ENCODE measurements at regions of chr3 and their contacts with region 1.

Region 1: GRCh38 chr3:120417272-120417911 is 33.4 kb downstream of the FSTL1 start:
- DNase-seq: peak; percentile 95 to 96
- H3K4me3 ChIP-seq: no peak overlapping the region
- H3K27ac ChIP-seq: peak overlapping the region; percentile 51 to 79 (median 58)
- H3K4me1 ChIP-seq: peaks cover 13 to 31% of the 10 kb centered on the region in 2 donors
- H3K27me3 ChIP-seq: no peaks in the 10 kb centered on the region
- CTCF ChIP-seq: peak; percentile 68 to 98 (median 88)
- POLR2A ChIP-seq: peak in 1 of 2 donors; percentile 62

Region 2: GRCh38 chr3:120245386-120245785 is 172.0 kb before region 1 on chr3:
- intact Hi-C with region 1: loop called (anchors 2 kb)
- DNase-seq: no peak
- H3K4me3 ChIP-seq: no peak overlapping the region
- H3K27ac ChIP-seq: no peak overlapping the region
- H3K4me1 ChIP-seq: no peaks in the 10 kb centered on the region
- H3K27me3 ChIP-seq: no peaks in the 10 kb centered on the region
- CTCF ChIP-seq: no peak
- POLR2A ChIP-seq: no peak

Region 3: DNA sequence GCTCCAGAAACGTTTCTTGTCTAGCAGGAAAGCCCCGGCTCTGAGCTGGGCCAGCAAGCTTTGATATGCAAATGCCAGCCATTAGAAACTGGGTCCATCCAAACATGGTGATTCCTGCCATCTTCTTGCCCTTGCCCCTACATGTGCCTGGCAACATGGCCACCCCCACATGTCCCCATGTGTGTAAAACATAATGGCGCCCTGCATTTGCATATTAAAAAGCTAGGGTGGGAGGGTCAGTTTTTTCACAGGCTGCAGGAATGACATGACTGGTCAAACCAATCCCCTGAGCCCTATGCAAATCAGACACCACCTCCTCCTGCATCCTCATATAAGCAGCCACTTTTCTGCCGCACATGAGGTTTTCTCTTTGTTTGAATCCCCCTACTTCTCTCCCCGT is 153.6 kb before region 1 on chr3:
- intact Hi-C with region 1: no loop called
- DNase-seq: no peak
- H3K4me3 ChIP-seq: no peak overlapping the region
- H3K27ac ChIP-seq: no peak overlapping the region
- H3K4me1 ChIP-seq: no peaks in the 10 kb centered on the region
- H3K27me3 ChIP-seq: no peaks in the 10 kb centered on the region
- CTCF ChIP-seq: no peak
- POLR2A ChIP-seq: no peak

Region 4: GRCh38 chr3:120274739-120275167 is 142.6 kb before region 1 on chr3:
- intact Hi-C with region 1: no loop called
- DNase-seq: peak; percentile 61 to 70
- H3K4me3 ChIP-seq: no peak overlapping the region
- H3K27ac ChIP-seq: peak overlapping the region in 1 of 3 donors; percentile 26
- H3K4me1 ChIP-seq: no peaks in the 10 kb centered on the region
- H3K27me3 ChIP-seq: no peaks in the 10 kb centered on the region
- CTCF ChIP-seq: no peak
- POLR2A ChIP-seq: no peak

Region 5: DNA sequence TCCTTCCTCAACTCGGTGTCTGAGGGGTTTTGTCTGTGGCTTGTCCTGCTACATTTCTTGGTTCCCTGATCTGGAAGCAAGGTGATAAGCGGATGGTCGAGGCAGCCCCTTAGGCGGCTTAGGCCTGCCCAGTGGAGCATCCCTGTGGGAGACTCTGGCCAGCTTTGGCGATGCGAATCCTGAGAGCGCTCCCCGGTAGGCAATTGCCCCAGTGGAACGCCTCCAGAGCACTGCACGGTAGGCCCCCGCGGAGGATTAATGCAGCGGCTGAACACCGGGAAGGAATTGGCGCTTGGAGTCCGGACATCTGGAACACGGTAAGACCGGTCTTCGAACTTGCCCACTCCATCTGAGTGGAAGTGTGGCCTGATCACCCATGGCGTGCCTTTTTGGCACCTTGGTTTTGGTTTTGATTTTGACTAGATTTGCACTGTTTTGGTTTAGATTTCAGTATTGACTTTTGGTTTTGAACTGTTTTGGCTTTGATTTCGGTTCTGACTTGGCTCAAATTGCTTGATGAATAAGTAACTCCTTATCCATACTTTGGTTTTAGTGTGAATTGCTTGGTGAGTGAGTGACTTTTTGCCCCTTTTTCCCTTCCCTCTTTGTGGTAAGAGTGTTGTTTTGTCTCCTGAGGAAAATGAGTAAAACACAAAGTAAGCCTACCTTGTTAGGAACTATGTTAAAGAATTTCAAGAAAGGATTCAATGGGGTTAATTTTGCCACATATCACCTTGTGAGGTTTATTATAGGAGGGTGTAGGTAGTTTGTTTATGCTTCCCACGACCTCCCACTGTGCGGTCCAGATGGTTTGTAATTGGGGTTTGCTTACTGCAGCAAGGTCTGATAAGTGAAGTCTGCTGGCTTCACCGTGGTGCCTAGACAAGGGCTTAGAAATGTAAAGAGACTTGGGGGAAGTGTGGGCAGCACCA is 105.3 kb before region 1 on chr3:
- intact Hi-C with region 1: no loop called
- DNase-seq: no peak
- H3K4me3 ChIP-seq: no peak overlapping the region
- H3K27ac ChIP-seq: no peak overlapping the region
- H3K4me1 ChIP-seq: no peaks in the 10 kb centered on the region
- H3K27me3 ChIP-seq: no peaks in the 10 kb centered on the region
- CTCF ChIP-seq: no peak
- POLR2A ChIP-seq: no peak

Region 6: GRCh38 chr3:120348981-120349818 is 68.2 kb before region 1 on chr3 and contains the start of gene LRRC58:
- intact Hi-C with region 1: loop called (anchors 10 kb)
- DNase-seq: peak; percentile 91 to 94
- H3K4me3 ChIP-seq: peak within 1 kb of the TSS; percentile 51 to 76 (median 52)
- H3K27ac ChIP-seq: peak within 1 kb of the TSS; percentile 63 to 97 (median 90)
- H3K4me1 ChIP-seq: peaks cover 12 to 18% of the 10 kb centered on the region in 2 donors
- H3K27me3 ChIP-seq: no peaks in the 10 kb centered on the region
- CTCF ChIP-seq: peak in 4 of 6 experiments; percentile 10 to 28 (median 17)
- POLR2A ChIP-seq: peak; percentile 69 to 96
- total RNA-seq, gene LRRC58: 40.3 to 52.4 (median 44.6) TPM

Region 7: GRCh38 chr3:120506828-120507774 is 89.7 kb after region 1 on chr3:
- intact Hi-C with region 1: loop called (anchors 5 kb)
- DNase-seq: peak; percentile 36 to 37
- H3K4me3 ChIP-seq: no peak overlapping the region
- H3K27ac ChIP-seq: peak overlapping the region in 2 of 3 donors; percentile 62 to 72
- H3K4me1 ChIP-seq: peaks cover 17 to 21% of the 10 kb centered on the region in 2 donors
- H3K27me3 ChIP-seq: no peaks in the 10 kb centered on the region
- CTCF ChIP-seq: peak; percentile 38 to 63 (median 52)
- POLR2A ChIP-seq: no peak

Measured in thyroid gland (tissue), 4 donors.